ENCODE measurements at regions of chr19 and their contacts with region 1.

Region 1: DNA sequence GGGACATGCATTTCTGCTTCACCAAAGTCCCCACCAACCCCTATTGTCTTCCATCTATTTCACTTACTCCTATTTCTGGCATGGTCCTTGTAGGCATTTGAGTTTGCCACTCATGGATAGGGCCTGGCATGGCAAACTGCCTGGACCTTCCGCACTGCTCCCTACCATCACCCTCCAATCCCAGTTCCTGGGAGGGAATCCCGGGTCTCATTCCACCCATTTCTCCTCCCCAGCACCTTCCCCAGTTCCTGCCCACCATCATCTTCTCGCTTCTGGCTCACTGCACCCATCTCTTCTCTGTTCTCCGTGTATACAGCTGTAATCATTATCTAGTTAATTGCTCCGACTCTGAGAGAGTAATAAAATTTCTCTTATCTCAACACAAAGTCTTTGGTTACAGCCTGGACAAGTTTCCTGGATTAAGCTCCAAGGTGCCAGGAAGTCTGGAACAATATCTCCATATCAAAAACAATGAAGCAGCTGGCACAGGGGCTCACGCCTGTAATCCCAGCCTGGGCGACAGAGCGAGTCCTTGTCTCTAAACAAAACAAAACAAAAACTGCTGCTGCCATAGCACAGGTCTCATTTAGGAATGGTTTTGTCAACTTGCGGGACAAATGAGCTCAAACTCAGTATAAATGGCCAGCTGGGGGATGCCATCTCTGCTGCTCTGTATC is 17.0 kb upstream of the COX7A1 start:
- DNase-seq: no peak
- H3K4me3 Mint-ChIP-seq: no peak overlapping the region
- H3K27ac Mint-ChIP-seq: no peak overlapping the region
- H3K4me1 Mint-ChIP-seq: peaks cover 3% of the 10 kb centered on the region
- H3K27me3 Mint-ChIP-seq: no peaks in the 10 kb centered on the region

Region 2: DNA sequence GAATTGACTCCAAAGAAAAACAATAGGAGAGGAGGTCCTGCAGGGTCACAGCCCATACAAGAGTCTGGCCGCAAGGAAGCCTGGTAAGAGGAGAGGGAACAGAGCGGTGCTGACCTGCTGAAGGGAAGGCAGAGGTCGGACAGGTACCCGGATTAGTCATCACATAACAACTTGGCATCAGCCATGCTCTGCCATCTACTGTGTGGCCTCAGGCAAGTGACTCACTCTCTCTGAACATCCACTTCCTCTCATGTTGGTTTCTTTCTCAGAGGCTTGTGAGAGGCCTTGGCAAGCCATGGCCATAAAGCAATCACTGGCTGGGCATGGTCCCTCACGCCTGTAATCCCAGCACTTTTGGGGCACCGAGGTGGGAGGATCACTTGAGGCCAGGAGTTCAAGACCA is 36.7 kb before region 1 on chr19:
- CTCF ChIA-PET with region 1: interaction called, 54 read pairs
- POLR2A ChIA-PET with region 1: interaction called, 3 read pairs
- intact Hi-C with region 1: loop called (anchors 1 kb)
- DNase-seq: peak; percentile 72
- H3K4me3 Mint-ChIP-seq: no peak overlapping the region
- H3K27ac Mint-ChIP-seq: peak overlapping the region; percentile 86
- H3K4me1 Mint-ChIP-seq: peaks cover 34% of the 10 kb centered on the region
- H3K27me3 Mint-ChIP-seq: no peaks in the 10 kb centered on the region

Measured in activated CD4-positive, alpha-beta memory T cell treated with anti-CD3 and anti-CD28 coated beads for 36 hours (primary cell).